Caco-2 (cell line): ENCODE measurements at regions of chr11 and their contacts with region 1.

Region 1: DNA sequence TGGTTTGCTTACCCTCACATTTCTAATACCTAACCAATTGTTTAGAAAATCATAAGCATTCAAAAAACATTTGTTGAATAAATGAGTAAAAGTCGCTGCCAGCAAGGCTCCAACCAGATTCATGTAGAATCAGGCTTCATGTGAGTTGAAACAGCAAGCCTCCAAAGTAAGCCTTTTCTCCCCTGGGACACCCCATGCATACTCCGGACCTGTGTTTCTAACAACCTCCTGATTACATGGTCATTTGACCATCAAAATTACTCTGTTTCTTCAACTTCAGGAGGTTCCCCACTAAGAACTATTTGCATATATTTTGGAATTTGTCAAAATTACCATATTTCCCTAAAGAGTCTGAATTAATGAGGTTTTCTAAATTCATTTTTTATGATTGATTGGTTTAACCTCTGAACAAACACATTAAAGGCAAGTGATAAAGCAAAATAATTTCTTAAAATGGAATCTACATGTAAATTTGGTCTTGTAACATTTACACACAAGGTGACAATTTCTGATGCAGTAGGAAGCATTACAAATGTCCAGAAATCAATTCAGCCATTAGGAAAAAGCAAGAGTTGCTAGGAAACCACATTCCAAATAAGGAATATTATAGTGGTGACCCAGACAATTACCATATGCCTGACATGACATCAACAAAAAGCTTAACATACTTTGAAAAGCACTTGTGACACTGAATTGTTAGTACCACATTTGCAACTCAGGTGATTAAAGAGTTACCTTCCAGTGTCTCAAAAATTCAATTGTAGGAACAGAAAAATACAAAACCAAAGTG is 252.6 kb downstream of the GUCY1A2 start:
- DNase-seq: no peak
- H3K4me3 ChIP-seq: no peak overlapping the region
- H3K4me3 Mint-ChIP-seq: no peak overlapping the region
- H3K27ac Mint-ChIP-seq: no peak overlapping the region
- H3K4me1 ChIP-seq: no peaks in the 10 kb centered on the region
- H3K4me1 Mint-ChIP-seq: no peaks in the 10 kb centered on the region
- H3K27me3 ChIP-seq: no peaks in the 10 kb centered on the region
- H3K27me3 Mint-ChIP-seq: no peaks in the 10 kb centered on the region
- CTCF ChIP-seq: no peak

Region 2: GRCh38 chr11:106311531-106312230 is 454.0 kb before region 1 on chr11:
- CTCF ChIA-PET with region 1: no interaction called
- POLR2A ChIA-PET with region 1: no interaction called
- intact Hi-C with region 1: no loop called
- DNase-seq: no peak
- H3K4me3 ChIP-seq: no peak overlapping the region
- H3K4me3 Mint-ChIP-seq: no peak overlapping the region
- H3K27ac Mint-ChIP-seq: no peak overlapping the region
- H3K4me1 ChIP-seq: no peaks in the 10 kb centered on the region
- H3K4me1 Mint-ChIP-seq: no peaks in the 10 kb centered on the region
- H3K27me3 ChIP-seq: no peaks in the 10 kb centered on the region
- H3K27me3 Mint-ChIP-seq: no peaks in the 10 kb centered on the region
- CTCF ChIP-seq: no peak

Region 3: DNA sequence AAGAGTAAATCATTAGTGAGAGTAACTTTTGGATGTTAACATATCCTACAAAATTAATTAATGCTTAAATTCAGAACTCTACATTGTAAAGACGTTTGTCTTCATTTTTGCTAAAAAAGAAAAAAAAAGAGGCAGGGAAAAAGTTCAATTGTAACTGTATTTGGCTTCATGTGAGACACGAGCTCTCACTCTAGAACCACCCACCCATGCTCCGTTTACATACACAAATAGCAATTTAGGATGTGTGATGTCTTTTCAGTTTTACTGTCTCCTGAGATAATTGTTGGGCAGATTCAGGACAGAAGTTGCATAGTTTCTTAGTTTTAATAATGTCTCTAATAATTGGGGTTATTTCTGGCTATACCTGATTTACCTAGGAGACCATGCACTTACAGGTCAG is 439.6 kb before region 1 on chr11:
- CTCF ChIA-PET with region 1: no interaction called
- POLR2A ChIA-PET with region 1: no interaction called
- intact Hi-C with region 1: no loop called
- DNase-seq: no peak
- H3K4me3 ChIP-seq: no peak overlapping the region
- H3K4me3 Mint-ChIP-seq: no peak overlapping the region
- H3K27ac Mint-ChIP-seq: no peak overlapping the region
- H3K4me1 ChIP-seq: no peaks in the 10 kb centered on the region; the same call in 1 of the 2 replicates
- H3K4me1 Mint-ChIP-seq: no peaks in the 10 kb centered on the region
- H3K27me3 ChIP-seq: no peaks in the 10 kb centered on the region
- H3K27me3 Mint-ChIP-seq: no peaks in the 10 kb centered on the region
- CTCF ChIP-seq: no peak

Region 4: GRCh38 chr11:106834567-106834966 is 68.9 kb after region 1 on chr11:
- CTCF ChIA-PET with region 1: no interaction called
- POLR2A ChIA-PET with region 1: no interaction called
- intact Hi-C with region 1: loop called (anchors 5 kb)
- DNase-seq: peak in 1 of 2 experiments; percentile 17
- H3K4me3 ChIP-seq: no peak overlapping the region
- H3K4me3 Mint-ChIP-seq: no peak overlapping the region
- H3K27ac Mint-ChIP-seq: no peak overlapping the region
- H3K4me1 ChIP-seq: peaks cover 35% of the 10 kb centered on the region
- H3K4me1 Mint-ChIP-seq: peaks cover 15% of the 10 kb centered on the region
- H3K27me3 ChIP-seq: no peaks in the 10 kb centered on the region
- H3K27me3 Mint-ChIP-seq: no peaks in the 10 kb centered on the region
- CTCF ChIP-seq: no peak